CD8-positive, alpha-beta T cell (primary cell): ENCODE measurements at regions of chr2 and their contacts with region 1.

Region 1: GRCh38 chr2:150732064-150732463 is 244.6 kb upstream of the RND3 start:
- DNase-seq: no peak
- ATAC-seq: no peak
- H3K4me3 ChIP-seq: no peak overlapping the region
- H3K4me3 Mint-ChIP-seq: no peak overlapping the region
- H3K27ac ChIP-seq: no peak overlapping the region
- H3K27ac Mint-ChIP-seq: no peak overlapping the region
- H3K4me1 ChIP-seq: no peaks in the 10 kb centered on the region
- H3K4me1 Mint-ChIP-seq: no peaks in the 10 kb centered on the region
- H3K27me3 ChIP-seq: no peaks in the 10 kb centered on the region
- H3K27me3 Mint-ChIP-seq: no peaks in the 10 kb centered on the region
- CTCF ChIP-seq: no peak

Region 2: DNA sequence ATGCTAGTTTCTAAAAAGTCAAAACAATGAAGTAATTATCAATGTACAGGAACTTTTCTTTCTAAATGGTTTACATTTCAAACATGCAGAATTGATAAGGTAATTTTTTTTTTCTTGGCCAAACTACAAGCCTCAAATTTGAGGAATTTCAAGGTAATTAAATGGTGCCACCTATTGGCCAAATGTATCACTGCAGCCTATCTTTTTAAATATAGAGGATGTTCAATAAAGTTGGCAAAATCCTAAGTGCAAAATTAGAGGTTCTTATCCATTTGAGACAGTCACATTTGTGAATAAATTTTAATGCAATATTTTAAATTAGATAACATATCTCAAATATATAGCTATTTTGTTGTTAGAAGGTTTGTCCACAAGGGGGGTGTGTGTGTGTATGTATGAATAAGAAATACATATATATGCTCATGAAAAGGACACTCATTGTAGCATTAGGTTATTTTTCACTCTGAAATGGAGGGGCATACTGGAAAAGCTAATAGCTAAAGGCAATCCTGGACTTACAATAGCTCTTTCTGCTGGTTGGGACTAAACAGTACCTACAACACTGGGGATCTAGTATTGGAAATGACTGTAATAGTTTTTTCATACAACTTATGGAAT is 1170.6 kb before region 1 on chr2:
- CTCF ChIA-PET with region 1: no interaction called
- POLR2A ChIA-PET with region 1: no interaction called
- intact Hi-C with region 1: no loop called
- DNase-seq: peak in 3 of 9 experiments; percentile 43 to 54 (median 50)
- ATAC-seq: peak; percentile 54
- H3K4me3 ChIP-seq: no peak overlapping the region
- H3K4me3 Mint-ChIP-seq: no peak overlapping the region
- H3K27ac ChIP-seq: no peak overlapping the region
- H3K27ac Mint-ChIP-seq: no peak overlapping the region
- H3K4me1 ChIP-seq: no peaks in the 10 kb centered on the region
- H3K4me1 Mint-ChIP-seq: peaks cover 4% of the 10 kb centered on the region
- H3K27me3 ChIP-seq: no peaks in the 10 kb centered on the region
- H3K27me3 Mint-ChIP-seq: peaks cover 2% of the 10 kb centered on the region
- CTCF ChIP-seq: peak; percentile 99

Region 3: DNA sequence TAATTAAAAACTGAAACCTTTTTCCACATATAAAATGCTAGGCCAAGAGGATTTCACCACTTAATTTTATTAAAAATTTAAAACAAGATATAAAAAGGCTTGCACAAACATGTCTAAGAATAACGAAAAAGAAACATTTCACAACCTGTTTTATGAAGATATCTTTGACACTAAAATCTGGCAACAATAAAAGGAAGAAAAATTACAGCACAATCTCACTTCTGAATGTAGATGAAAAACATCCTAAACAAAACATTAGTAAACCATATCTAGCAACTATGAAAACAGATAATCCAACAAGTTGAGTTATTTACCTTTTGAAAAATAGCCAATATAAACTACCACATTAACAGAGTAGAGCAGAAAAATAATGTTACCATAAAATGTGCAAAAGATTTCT is 959.1 kb before region 1 on chr2:
- CTCF ChIA-PET with region 1: no interaction called
- POLR2A ChIA-PET with region 1: no interaction called
- intact Hi-C with region 1: loop called in 1 of 2 experiments (anchors 10 kb)
- DNase-seq: no peak
- ATAC-seq: no peak
- H3K4me3 ChIP-seq: no peak overlapping the region
- H3K4me3 Mint-ChIP-seq: no peak overlapping the region
- H3K27ac ChIP-seq: no peak overlapping the region
- H3K27ac Mint-ChIP-seq: no peak overlapping the region
- H3K4me1 ChIP-seq: no peaks in the 10 kb centered on the region
- H3K4me1 Mint-ChIP-seq: no peaks in the 10 kb centered on the region
- H3K27me3 ChIP-seq: no peaks in the 10 kb centered on the region
- H3K27me3 Mint-ChIP-seq: no peaks in the 10 kb centered on the region
- CTCF ChIP-seq: no peak

Region 4: GRCh38 chr2:150051004-150051403 is 681.1 kb before region 1 on chr2:
- CTCF ChIA-PET with region 1: no interaction called
- POLR2A ChIA-PET with region 1: no interaction called
- intact Hi-C with region 1: no loop called
- DNase-seq: no peak
- ATAC-seq: no peak
- H3K4me3 ChIP-seq: no peak overlapping the region
- H3K4me3 Mint-ChIP-seq: no peak overlapping the region
- H3K27ac ChIP-seq: no peak overlapping the region
- H3K27ac Mint-ChIP-seq: no peak overlapping the region
- H3K4me1 ChIP-seq: no peaks in the 10 kb centered on the region
- H3K4me1 Mint-ChIP-seq: no peaks in the 10 kb centered on the region
- H3K27me3 ChIP-seq: no peaks in the 10 kb centered on the region
- H3K27me3 Mint-ChIP-seq: no peaks in the 10 kb centered on the region
- CTCF ChIP-seq: no peak

Region 5: GRCh38 chr2:150255528-150255927 is 476.5 kb before region 1 on chr2:
- CTCF ChIA-PET with region 1: no interaction called
- POLR2A ChIA-PET with region 1: no interaction called
- intact Hi-C with region 1: no loop called
- DNase-seq: no peak
- ATAC-seq: no peak
- H3K4me3 ChIP-seq: no peak overlapping the region
- H3K4me3 Mint-ChIP-seq: no peak overlapping the region
- H3K27ac ChIP-seq: no peak overlapping the region
- H3K27ac Mint-ChIP-seq: no peak overlapping the region
- H3K4me1 ChIP-seq: no peaks in the 10 kb centered on the region
- H3K4me1 Mint-ChIP-seq: no peaks in the 10 kb centered on the region
- H3K27me3 ChIP-seq: no peaks in the 10 kb centered on the region
- H3K27me3 Mint-ChIP-seq: no peaks in the 10 kb centered on the region
- CTCF ChIP-seq: no peak

Region 6: GRCh38 chr2:150767991-150768746 is 36.1 kb after region 1 on chr2:
- CTCF ChIA-PET with region 1: no interaction called
- POLR2A ChIA-PET with region 1: no interaction called
- intact Hi-C with region 1: loop called in 1 of 2 experiments (anchors 1 kb)
- DNase-seq: no peak
- ATAC-seq: no peak
- H3K4me3 ChIP-seq: no peak overlapping the region
- H3K4me3 Mint-ChIP-seq: no peak overlapping the region
- H3K27ac ChIP-seq: no peak overlapping the region
- H3K27ac Mint-ChIP-seq: no peak overlapping the region
- H3K4me1 ChIP-seq: no peaks in the 10 kb centered on the region
- H3K4me1 Mint-ChIP-seq: no peaks in the 10 kb centered on the region
- H3K27me3 ChIP-seq: no peaks in the 10 kb centered on the region
- H3K27me3 Mint-ChIP-seq: no peaks in the 10 kb centered on the region
- CTCF ChIP-seq: no peak